Transverse colon (tissue), 4 donors: ENCODE measurements at regions of chr16 and their contacts with region 1.

Region 1: DNA sequence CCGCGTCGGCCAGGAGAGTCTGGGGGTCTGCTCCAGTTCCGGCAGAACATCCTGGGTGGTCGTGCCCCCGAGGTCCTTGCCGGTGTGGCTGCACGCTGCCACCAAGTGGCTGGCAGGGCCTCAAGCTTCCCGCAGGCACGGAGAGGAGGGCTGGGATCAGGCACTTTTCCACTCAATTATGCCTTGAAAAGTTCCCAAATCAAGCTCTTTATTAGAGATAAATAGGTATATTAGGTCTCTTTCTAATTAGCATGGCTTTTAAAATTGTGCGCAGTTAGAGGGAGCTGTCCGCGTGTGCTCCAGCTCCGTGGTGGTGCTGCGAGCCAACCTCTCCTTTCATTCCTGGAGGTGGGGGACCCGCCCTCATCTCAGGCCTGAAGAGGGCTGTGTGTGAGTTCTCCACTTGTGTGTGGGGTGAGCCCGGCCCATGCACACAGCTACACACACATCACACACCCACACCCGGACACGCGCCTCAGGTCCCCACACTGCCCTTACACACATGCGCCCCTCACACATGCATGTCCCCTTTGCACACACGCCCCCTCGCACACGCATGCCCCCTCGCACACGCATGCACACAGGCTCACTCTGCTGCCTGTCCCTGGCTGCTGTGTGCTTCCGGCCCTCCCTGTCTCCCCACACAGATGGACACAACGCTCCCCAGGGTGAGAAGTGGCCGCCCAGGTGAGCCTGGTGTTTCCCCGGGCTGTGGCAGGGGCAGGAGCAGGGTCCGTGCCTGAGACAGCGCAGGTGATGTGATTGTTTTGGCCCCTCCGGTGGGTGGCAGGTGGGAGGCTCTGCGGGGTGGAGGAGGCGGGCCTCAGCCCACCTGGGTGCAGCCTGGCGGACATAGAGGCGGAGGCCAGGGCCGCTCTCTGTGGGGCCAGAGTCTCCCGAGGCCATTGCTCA is 28.8 kb downstream of the CACNA1H start:
- DNase-seq: no peak
- H3K4me3 ChIP-seq: no peak overlapping the region
- H3K27ac ChIP-seq: peak overlapping the region; percentile 83 to 90 (median 86)
- H3K4me1 ChIP-seq: peaks cover 12 to 36% (median 28%) of the 10 kb centered on the region in 4 donors
- H3K27me3 ChIP-seq: peaks cover 8% of the 10 kb centered on the region
- CTCF ChIP-seq: no peak
- EP300 ChIP-seq: no peak
- POLR2A ChIP-seq: no peak

Region 2: DNA sequence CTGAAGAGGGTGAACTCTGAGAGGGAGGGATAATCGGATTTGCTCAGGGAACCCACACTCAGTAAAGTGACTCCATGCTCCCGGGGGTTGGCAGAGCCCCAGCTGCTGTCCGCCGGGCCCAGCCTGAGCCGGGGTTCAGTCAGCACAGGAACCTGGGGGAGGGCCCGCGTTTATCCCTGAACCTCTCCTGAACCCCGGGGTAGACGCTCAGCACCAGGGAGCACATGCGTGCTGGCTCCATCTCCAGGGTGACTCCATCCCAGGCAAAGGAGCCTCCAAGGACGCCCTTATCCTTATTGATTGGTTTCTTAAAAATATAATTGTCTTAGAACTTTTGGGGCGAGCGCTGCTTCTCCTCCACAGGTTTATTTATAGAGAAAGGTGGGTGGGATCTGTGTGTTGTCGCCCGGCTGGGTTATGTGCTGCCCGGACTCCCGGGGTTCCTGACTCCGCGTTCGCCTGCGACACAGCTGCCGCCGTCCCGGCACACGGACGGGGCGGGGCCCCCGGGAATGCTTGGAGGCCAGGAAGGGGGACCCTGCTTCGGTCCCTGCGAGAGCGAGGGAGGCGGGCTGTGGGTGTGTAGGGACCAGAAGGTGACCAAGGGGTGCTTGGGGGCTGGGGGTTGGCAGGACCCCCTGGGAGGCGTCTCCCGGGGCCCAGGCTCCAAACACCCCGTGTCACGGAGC is 24.9 kb before region 1 on chr16:
- in situ Hi-C with region 1: no loop called
- intact Hi-C with region 1: loop called (anchors 2 kb)
- DNase-seq: no peak
- H3K4me3 ChIP-seq: no peak overlapping the region
- H3K27ac ChIP-seq: peak overlapping the region; percentile 76 to 92 (median 84)
- H3K4me1 ChIP-seq: peaks cover 17 to 63% (median 36%) of the 10 kb centered on the region in 4 donors
- H3K27me3 ChIP-seq: peaks cover 87% of the 10 kb centered on the region
- CTCF ChIP-seq: no peak
- EP300 ChIP-seq: no peak
- POLR2A ChIP-seq: no peak